Mucosa of descending colon (tissue), 3 donors: ENCODE measurements at regions of chr6 and their contacts with region 1.

Region 1: DNA sequence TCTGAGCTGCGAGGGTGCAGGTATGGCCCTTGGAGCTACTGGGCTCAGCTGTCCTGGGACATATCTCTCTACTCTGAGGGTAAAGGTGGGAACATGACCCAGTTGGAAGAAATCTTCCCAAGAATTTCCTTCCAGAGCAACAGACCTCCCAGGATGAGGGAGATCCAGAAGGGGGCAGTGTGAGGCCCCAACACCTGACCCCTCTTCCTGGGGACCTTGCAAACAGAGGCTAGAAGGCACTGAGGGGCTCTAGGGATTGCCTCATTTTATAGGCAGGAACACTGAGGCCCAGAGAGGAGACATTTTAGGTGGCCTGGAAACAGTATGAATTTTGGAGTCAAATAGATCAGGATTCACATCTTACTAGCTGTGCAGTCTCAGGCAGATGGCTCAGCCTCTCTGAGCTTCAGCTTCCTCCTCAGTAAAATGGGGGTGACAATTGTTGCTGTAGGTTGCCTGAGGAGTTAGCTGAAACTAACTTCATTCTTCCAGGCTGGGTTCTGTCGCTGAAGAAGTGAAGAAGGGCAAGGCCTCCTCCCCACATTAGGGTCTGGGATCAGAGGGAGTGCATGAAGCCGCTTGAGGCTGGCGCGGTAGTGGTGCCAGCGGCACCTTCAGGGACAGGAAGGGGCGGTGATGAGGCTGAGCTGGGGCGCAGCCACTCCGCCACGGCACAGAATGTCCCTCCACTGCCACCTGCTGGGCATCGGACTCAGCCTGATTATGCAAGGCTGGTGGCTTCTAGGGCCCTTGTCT is 11.4 kb downstream of the KCNK17 start:
- DNase-seq: peak; percentile 85 to 98 (median 94)
- ATAC-seq: peak; percentile 97
- H3K4me3 ChIP-seq: no peak overlapping the region
- H3K4me1 ChIP-seq: no peaks in the 10 kb centered on the region
- CTCF ChIP-seq: peak; percentile 82

Region 2: DNA sequence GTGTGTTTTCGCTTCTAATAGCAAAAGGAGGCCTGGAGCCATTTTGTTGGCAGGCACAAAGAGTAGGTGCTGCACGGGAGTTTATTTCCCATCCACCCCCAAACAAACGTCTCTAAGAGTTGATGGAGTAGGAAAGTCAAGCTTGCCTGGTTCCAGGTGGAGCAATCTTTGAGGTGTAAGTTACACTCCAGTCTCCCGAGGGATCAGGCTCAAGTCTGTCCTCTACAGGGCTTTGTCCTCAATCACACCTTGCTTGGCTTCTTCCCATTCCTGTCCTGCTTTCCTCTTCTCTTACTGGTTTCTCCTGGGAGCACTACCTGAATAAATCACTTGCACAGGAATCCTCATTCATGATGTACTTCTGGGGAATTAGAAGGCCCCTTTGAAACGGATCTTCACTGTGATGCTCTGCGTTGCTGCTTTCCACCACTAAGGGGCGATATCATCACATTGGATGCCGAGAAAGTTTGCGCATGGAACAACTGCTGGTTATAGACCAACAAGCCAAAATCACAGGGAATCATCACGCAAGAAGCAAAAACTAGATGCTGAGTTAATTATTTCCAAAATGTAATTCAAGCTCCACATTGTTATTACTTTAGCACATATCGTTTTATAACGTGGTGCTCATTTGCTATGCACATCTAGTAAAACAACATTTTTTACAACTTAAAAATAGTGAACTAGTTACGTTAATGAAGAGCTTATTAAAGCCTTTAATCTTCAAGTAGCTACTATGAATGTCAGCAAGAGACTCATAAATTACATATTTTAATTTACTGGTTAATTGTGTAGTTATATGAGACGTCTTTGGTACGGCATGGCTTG is 430.9 kb before region 1 on chr6:
- intact Hi-C with region 1: loop called in 1 of 2 experiments (anchors 10 kb)
- DNase-seq: peak in 2 of 3 donors; percentile 46 to 72
- ATAC-seq: peak; percentile 62
- H3K4me3 ChIP-seq: no peak overlapping the region
- H3K4me1 ChIP-seq: no peaks in the 10 kb centered on the region
- CTCF ChIP-seq: peak; percentile 72

Region 3: GRCh38 chr6:38973178-38974054 is 329.4 kb before region 1 on chr6:
- intact Hi-C with region 1: loop called in 1 of 2 experiments (anchors 10 kb)
- DNase-seq: peak in 1 of 3 donors; percentile 49
- ATAC-seq: peak; percentile 42
- H3K4me3 ChIP-seq: no peak overlapping the region
- H3K4me1 ChIP-seq: no peaks in the 10 kb centered on the region
- CTCF ChIP-seq: no peak

Region 4: GRCh38 chr6:39018107-39018506 is 284.7 kb before region 1 on chr6:
- intact Hi-C with region 1: no loop called
- DNase-seq: no peak
- ATAC-seq: no peak
- H3K4me3 ChIP-seq: no peak overlapping the region
- H3K4me1 ChIP-seq: no peaks in the 10 kb centered on the region
- CTCF ChIP-seq: no peak

Region 5: DNA sequence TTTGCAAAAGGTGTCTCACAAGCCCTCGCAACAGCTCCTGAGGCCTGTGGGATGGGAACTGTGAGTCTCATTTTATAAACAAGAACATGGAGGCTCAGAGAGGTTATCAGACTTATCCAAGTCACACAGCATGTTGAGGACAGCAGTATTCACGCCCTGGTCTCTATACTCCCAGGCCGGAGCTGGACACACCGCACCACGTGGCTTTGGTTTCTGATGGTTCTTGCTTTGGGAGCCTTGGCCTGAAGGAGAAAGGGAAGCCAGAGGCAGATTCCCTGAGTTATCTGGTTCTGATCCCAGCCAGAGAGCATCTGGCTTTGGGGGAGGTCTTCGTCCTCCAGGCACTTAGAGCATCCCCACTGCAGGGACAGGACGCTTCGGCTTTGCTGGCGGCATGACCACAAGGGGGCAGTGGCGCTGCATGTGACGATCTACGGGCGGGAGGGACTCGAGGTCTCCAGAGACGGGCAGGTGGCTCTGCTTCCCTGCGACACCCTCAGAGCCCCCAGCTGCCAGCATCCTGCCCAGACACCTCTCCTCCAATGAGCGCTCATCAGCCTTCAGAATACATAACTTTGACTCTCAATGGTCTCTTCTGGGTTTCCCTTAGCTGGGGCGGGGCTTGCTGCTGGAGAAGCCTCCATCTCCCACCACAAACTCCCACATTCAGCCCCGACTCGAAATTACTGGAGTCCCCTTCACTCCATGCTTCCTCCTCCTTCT is 136.5 kb before region 1 on chr6:
- intact Hi-C with region 1: loop called (anchors 2 to 5 kb)
- DNase-seq: peak; percentile 83 to 92 (median 90)
- ATAC-seq: peak; percentile 81
- H3K4me3 ChIP-seq: no peak overlapping the region
- H3K4me1 ChIP-seq: peaks cover 18% of the 10 kb centered on the region
- CTCF ChIP-seq: peak; percentile 88

Region 6: DNA sequence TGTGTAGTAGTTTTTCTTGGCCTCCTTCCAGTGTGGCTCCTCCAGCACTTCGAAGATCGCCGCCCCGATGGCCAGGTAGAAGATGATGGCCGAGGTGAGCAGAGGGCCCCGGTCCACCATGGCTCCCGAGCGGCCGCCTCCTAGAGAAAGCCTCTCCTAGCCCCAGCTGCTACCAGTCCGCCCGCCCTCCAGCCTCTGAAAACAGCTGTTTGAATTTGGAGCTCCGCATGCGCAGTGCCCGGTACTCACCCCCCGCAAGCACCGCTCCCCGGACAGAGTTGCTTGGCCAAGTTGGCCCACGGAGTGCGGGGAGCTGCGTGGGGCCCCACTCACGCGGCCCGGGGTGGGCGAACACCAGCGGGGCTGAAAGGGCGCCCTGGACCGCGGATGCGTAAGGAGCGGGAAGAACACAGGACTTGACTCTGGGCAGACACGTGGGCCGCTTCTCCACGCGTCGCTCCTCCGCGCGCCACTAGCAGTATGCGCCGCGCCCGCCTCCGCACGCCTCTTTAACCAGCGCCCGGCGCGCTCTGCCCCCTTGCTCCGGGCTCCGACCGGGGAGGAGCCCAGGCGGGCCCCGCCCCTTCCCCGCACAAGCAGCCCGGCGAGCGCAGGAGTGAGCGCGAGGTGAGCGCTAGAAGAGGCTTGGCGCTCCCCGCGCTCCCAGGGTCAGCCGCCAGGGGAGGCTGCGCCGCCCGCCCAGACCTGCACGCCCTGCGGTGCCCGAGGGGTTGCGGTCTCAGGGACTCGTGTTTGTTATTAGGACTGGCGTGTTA is 73.7 kb before region 1 on chr6 and contains the start of gene KCNK5:
- intact Hi-C with region 1: loop called in 1 of 2 experiments (anchors 2 kb)
- DNase-seq: peak; percentile 89 to 94 (median 92)
- ATAC-seq: peak; percentile 87
- H3K4me3 ChIP-seq: peak within 1 kb of the TSS; percentile 27
- H3K4me1 ChIP-seq: peaks cover 18% of the 10 kb centered on the region
- CTCF ChIP-seq: peak; percentile 95
- total RNA-seq, gene KCNK5: 33.6 to 69.8 (median 42.7) TPM